ENCODE measurements at regions of chr1 and their contacts with region 1.

Region 1: DNA sequence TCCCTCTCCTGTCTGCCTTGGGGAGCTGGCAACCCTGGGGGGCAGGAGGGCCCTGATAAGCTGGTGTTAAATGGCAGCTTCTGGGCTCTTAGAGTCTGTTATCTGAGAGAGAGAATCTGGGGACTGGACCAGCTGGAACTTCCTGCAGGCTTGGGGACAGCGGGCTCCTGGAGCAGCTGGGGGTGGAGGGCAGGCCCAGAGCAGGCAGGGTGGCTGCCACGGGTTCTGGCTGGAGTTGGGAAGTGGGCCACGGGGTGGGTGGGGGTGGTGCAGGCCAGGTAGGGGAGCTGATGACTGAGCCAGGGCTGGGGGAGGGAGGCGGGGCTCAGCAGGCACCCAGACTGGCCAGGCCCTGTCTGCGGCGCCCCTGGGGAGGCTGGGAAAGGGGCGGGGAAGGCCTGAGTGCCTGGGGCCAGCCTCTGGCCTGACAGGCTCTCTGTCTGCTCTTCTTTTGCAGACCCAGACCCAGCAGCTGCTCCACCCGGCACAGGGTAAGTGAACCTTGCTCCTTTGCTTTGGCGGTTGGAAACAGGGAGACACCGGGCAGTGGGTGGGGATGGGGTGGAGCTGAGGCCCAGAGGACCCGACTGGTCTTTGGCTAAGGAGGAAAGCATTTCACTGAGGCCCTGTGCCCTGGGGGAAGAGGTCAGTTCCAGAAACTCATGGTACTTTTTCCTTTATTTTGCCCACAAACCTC is 48.6 kb downstream of the ARHGEF10L start:
- DNase-seq: no peak
- ATAC-seq: peak; percentile 85

Region 2: GRCh38 chr1:16903054-16903453 is 685.1 kb before region 1 on chr1:
- intact Hi-C with region 1: no loop called
- DNase-seq: no peak
- ATAC-seq: no peak

Region 3: GRCh38 chr1:17494114-17494729 is 93.9 kb before region 1 on chr1:
- intact Hi-C with region 1: no loop called
- DNase-seq: peak; percentile 83
- ATAC-seq: peak; percentile 72

Region 4: DNA sequence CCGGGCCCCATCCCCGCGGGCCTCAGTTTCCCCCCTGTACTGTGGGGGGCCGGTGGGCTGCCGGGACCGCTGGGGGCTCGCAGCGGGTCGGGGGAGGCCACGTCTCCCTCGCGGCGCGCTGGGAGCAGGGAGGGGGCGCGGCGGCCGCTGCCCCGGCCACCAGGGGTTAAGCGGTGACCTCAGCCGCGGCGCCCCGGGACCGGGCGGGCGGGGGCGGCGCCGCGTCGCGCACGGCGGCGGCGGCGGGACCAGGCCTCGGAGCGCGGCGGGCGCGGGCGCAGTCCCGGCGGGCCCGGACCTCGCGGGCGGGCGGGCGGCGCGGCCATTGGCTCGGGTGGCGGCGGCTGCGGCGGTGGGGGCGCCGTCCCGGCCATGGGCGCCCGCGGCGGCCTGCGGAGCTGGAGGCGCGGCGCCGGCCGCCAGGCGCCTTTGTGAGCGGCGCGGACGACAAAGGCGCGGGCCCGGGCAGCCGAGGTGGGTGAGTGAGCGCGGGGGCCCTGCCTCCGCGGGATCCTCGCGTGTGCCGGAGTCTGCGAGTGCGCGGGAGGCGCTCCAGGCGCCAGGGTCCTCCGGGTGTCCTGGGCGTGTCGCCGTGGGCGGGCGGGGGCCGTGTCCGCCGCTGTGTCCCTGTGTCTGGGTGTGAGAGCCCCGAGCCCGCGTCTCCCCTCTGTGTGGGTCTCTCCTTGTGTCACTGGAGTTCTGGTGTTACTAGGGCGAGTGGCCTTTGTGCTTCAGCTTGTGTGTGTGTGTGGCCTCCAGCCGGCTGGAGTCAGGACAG is 48.5 kb before region 1 on chr1 and contains the start of gene ARHGEF10L:
- intact Hi-C with region 1: loop called (anchors 2 kb)
- DNase-seq: peak; percentile 74
- ATAC-seq: peak; percentile 45
- total RNA-seq, gene ARHGEF10L: 59.9 TPM

Region 5: GRCh38 chr1:17569200-17570161 is 18.7 kb before region 1 on chr1:
- intact Hi-C with region 1: loop called (anchors 2 kb)
- DNase-seq: peak; percentile 88
- ATAC-seq: peak; percentile 83

Measured in Right ventricle myocardium inferior (tissue), 1 donor.